ENCODE measurements at regions of chr10 and their contacts with region 1.

Region 1: DNA sequence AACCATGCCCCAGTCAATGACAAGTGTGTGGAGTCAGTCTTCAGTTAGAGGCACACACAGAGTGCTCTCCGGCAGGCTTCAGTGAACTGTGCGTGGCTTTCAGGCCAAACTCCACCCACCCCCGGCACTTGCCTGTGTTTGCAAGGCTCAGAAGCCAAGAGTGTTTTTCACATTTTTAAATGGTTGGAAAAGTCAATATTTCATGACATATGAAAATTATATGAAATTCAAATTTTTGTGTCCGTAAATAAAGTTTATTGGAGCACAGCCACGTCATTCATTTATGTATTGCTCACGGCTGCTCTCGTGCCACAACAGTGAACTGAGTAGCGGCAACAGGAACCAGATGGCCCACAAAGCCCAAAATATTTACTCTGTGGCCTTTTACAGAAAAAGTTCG is 104.7 kb downstream of the SFMBT2 start:
- DNase-seq: peak; percentile 67
- ATAC-seq: peak; percentile 87
- H3K4me3 ChIP-seq: peak overlapping the region in 4 of 5 experiments; percentile 7 to 42 (median 24)
- H3K4me3 Mint-ChIP-seq: peak overlapping the region; percentile 82
- H3K27ac ChIP-seq: peak overlapping the region; percentile 66 to 90
- H3K27ac Mint-ChIP-seq: peak overlapping the region; percentile 96
- H3K4me1 ChIP-seq: peaks cover 31 to 38% of the 10 kb centered on the region in 2 donors
- H3K4me1 Mint-ChIP-seq: peaks cover 51% of the 10 kb centered on the region
- H3K27me3 ChIP-seq: no peaks in the 10 kb centered on the region
- H3K27me3 Mint-ChIP-seq: no peaks in the 10 kb centered on the region
- CTCF ChIP-seq: no peak

Region 2: GRCh38 chr10:7337431-7338171 is 31.5 kb after region 1 on chr10:
- CTCF ChIA-PET with region 1: no interaction called
- POLR2A ChIA-PET with region 1: no interaction called
- intact Hi-C with region 1: loop called (anchors 2 kb)
- DNase-seq: peak; percentile 42
- ATAC-seq: peak; percentile 61
- H3K4me3 ChIP-seq: no peak overlapping the region
- H3K4me3 Mint-ChIP-seq: peak overlapping the region; percentile 20
- H3K27ac ChIP-seq: no peak overlapping the region
- H3K27ac Mint-ChIP-seq: peak overlapping the region; percentile 27
- H3K4me1 ChIP-seq: peaks cover 10 to 16% of the 10 kb centered on the region in 2 donors
- H3K4me1 Mint-ChIP-seq: peaks cover 22% of the 10 kb centered on the region
- H3K27me3 ChIP-seq: no peaks in the 10 kb centered on the region
- H3K27me3 Mint-ChIP-seq: no peaks in the 10 kb centered on the region
- CTCF ChIP-seq: no peak